ENCODE measurements at regions of chr11 and their contacts with region 1.

Region 1: DNA sequence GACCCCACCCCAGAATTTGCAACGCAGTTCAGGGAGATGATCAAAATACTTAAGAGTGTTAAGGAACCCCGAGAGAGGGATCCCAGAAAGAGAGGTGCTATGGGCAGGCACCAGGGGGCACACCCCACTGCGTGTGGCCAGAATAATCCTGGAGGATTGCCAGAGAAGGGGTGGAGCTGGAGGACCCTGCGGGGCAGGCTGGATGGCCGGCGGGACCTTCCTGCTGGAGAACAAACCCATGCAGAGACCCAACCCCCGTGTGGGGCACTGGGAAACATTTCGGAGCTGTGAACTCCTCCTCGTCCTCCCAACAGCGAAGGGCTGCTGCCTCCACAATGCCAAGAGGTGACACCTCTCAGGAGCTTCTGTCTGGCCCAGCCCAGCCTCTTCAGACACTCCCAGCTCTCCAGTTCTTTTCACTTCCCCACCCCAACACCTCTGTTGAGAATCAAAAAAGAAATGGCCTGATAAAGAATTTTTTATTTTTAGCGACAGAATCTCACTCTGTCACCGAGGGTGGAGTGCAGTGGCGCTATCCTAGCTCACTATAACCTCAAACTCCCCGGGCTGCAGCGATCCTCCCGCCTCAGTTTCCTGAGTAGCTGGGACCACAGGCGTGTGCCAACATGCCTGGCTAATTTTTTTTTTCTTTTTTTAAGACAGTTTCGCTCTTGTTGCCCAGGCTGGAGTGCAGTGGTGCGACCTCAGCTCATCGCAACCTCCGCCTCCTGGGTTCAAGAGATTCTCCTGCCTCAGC is 25.6 kb downstream of the RHOD start:
- DNase-seq: no peak
- H3K4me3 Mint-ChIP-seq: peak overlapping the region; percentile 30
- H3K27ac Mint-ChIP-seq: no peak overlapping the region
- H3K4me1 Mint-ChIP-seq: peaks cover 11% of the 10 kb centered on the region
- H3K27me3 Mint-ChIP-seq: peaks cover 2% of the 10 kb centered on the region

Region 2: DNA sequence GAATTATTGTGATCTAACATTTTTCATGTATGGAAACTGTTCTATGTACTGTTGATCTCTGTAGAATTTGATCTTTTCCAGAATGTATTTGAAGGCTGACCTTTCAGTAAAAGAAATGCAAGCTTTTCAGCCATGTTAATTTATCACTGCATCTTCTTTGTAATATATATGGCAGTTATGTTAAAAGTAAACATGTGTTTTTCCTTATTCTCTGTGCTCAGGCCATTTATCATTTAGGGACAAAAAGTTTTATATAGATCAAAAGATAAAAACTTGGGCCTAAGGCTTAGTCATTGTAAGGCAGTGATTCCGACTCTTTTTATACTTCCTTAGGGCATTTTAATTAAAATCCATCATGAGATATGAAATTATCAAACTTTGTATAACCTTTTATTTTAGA is 85.5 kb after region 1 on chr11:
- intact Hi-C with region 1: loop called (anchors 1 kb)
- DNase-seq: no peak
- H3K4me3 Mint-ChIP-seq: no peak overlapping the region
- H3K27ac Mint-ChIP-seq: no peak overlapping the region
- H3K4me1 Mint-ChIP-seq: peaks cover 16% of the 10 kb centered on the region
- H3K27me3 Mint-ChIP-seq: no peaks in the 10 kb centered on the region

Region 3: GRCh38 chr11:67239783-67240575 is 157.8 kb after region 1 on chr11:
- intact Hi-C with region 1: loop called (anchors 10 kb)
- DNase-seq: peak; percentile 98
- H3K4me3 Mint-ChIP-seq: peak overlapping the region; percentile 100
- H3K27ac Mint-ChIP-seq: peak overlapping the region; percentile 98
- H3K4me1 Mint-ChIP-seq: peaks cover 43% of the 10 kb centered on the region
- H3K27me3 Mint-ChIP-seq: no peaks in the 10 kb centered on the region

Region 4: DNA sequence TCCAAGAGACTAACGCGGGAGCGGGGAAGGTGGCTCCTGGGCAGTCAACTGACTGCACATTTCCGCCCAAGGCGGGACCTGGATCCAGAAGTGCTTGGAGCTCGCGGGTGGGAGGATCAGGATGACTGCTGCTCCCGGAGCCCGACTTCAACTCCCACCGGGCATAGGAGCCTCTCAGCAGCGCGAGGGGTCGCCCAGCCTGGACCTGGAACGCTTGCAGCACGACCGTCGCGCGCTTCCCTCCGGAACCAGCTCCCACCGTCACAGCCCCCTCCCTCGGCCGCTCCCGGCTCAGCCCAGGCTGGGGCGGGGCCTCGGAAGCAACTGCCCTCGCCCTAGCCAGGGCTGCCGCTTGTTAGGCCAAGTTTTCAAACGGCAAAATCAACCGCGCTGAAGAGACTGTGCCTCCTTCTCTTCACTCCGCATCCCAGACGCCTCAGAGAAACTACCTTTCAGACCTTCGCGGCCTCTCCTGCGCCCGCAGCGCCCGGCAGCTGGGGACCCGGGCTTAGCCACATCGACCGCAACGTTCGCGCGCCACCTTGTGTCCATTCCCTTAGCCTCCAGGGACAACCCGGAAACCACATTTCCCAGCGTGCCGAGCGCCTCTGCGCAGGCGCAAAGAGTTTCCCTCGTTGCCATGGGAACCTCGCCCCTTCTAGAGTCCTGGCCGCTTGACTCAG is 235.1 kb after region 1 on chr11:
- intact Hi-C with region 1: loop called (anchors 1 kb)
- DNase-seq: peak; percentile 100
- H3K4me3 Mint-ChIP-seq: peak overlapping the region; percentile 98
- H3K27ac Mint-ChIP-seq: peak overlapping the region; percentile 99
- H3K4me1 Mint-ChIP-seq: peaks cover 30% of the 10 kb centered on the region
- H3K27me3 Mint-ChIP-seq: peaks cover 6% of the 10 kb centered on the region

Region 5: DNA sequence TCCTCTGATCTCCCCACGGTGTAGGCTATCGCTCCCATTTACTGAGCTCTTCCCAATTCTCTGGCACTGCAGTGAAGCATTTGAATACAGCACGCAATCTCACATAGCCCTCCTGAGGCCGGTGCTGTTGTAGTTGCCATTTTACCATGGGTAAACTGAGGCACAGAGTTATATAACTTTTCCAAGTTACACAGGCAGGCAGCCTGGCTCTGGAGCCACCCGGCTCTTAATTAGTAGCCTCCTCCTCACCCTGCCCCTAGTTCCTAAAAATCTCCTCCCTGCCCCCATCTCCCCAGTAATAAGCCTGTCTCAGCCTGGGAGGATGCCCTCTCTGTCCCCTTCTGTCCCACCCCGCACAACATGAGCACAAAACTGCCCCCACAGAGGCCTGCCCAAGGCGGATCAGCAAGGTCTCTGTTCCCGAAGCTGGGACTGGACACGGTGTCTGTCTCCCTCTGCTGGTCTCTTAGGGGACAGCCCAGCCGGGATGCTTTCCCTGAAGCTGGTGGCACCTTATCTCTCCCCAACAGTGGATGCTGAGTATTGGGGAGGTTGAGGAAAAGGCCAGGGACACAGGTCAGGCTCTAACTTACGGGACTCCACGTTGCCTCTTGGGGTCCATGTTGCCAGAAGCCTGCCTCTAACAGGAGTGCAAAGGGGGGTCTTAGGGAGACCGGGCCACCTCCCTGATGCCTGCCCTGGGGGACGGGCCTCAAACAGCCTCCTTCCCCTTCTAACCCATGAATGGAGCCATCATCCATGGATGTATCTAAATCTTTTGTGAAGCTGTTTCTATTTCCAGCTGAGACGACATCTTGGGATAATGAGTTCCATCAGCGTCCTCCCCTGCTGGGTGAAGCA is 300.3 kb after region 1 on chr11:
- intact Hi-C with region 1: loop called (anchors 2 kb)
- DNase-seq: peak; percentile 95
- H3K4me3 Mint-ChIP-seq: no peak overlapping the region
- H3K27ac Mint-ChIP-seq: no peak overlapping the region
- H3K4me1 Mint-ChIP-seq: peaks cover 2% of the 10 kb centered on the region
- H3K27me3 Mint-ChIP-seq: peaks cover 23% of the 10 kb centered on the region

Measured in activated CD4-positive, alpha-beta T cell treated with anti-CD3 and anti-CD28 coated beads, Interleukin-2, amount 10 ng/mL, durations not matched to agents 24 days and 14 days (primary cell).